ENCODE measurements at regions of chr1 and their contacts with region 1.

Region 1: GRCh38 chr1:211133836-211134669 is at the start of gene KCNH1:
- DNase-seq: peak; percentile 77
- H3K4me3 ChIP-seq: peak within 1 kb of the TSS in 1 of 3 experiments; percentile 17
- H3K27ac ChIP-seq: no peak within 1 kb of the TSS
- H3K4me1 ChIP-seq: peaks cover 2% of the 10 kb centered on the region
- H3K27me3 ChIP-seq: peaks cover 11 to 31% of the 10 kb centered on the region in 2 experiments
- CTCF ChIP-seq: peak; percentile 84 to 96
- POLR2A ChIP-seq: no peak
- total RNA-seq, gene KCNH1: not detected in 2 replicates

Region 2: DNA sequence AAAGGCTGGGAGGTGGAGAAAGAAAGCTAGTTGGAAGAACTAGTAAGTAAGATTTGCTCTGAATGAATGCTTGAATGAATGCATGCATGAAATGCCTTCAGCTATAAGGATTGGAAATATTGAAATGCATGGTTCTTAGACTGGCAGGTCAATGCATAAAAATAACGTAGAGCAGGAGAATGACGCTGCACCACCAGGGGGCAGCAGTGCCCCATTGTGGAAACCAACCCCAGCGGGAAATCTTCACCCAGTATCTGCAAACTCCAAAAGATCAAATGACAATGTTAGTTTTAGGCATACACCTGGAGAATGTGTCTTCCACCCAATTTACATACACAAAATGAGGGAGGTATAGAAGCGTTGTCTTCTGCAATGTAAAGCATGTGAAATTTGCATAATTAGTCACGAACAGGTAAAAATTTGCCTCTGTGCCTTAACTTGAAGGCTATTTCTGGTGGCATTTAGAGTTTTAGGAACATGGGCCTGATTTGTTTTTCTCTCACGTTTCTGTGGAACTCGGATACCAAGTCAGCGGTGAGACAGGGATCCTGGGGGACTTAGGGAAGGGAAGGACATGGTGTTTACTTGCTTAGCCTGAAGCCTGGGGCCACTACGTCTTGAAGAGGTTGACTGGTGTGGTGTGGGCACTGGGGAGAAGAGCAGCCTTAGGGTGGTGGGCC is 726.7 kb before region 1 on chr1:
- CTCF ChIA-PET with region 1: interaction called, 202 read pairs
- POLR2A ChIA-PET with region 1: no interaction called
- dilution Hi-C with region 1: no loop called
- intact Hi-C with region 1: loop called (anchors 1 kb)
- DNase-seq: peak; percentile 61
- H3K4me3 ChIP-seq: no peak overlapping the region
- H3K27ac ChIP-seq: no peak overlapping the region
- H3K4me1 ChIP-seq: no peaks in the 10 kb centered on the region
- H3K27me3 ChIP-seq: peaks cover 3 to 11% of the 10 kb centered on the region in 2 experiments
- CTCF ChIP-seq: peak; percentile 83 to 95
- POLR2A ChIP-seq: no peak

Region 3: DNA sequence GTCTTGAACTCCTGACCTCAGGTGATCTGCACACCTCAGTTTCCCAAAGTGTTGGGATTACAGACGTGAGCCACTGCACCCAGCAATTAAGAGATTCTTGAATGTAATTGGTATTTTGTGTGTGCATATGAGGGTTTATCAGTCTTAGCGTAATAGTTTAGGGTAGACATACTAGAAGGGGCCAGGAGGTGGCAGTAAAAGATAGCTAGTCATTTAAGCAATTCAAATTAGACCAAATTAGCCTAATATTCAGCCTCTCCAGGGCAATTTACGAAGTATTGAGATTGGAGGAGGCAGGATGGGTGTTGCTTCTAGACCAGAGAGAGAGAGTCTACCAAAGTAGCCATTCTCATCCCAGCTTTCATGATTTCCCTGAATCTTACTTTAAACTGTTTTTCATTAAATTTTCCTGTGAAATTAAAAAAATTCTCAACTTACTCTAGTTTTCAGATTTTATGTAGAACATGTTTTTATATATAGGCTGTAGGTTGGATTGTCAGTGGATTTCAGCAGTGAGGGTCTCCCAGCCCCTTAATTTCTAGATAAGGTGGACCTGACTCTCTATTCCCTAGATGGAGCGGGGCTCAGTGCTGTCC is 685.7 kb before region 1 on chr1:
- CTCF ChIA-PET with region 1: interaction called, 163 read pairs
- POLR2A ChIA-PET with region 1: no interaction called
- dilution Hi-C with region 1: no loop called
- intact Hi-C with region 1: loop called (anchors 1 kb)
- DNase-seq: peak; percentile 62
- H3K4me3 ChIP-seq: no peak overlapping the region
- H3K27ac ChIP-seq: no peak overlapping the region
- H3K4me1 ChIP-seq: no peaks in the 10 kb centered on the region
- H3K27me3 ChIP-seq: peaks cover 0 to 3% of the 10 kb centered on the region in 2 experiments
- CTCF ChIP-seq: peak; percentile 32 to 50
- POLR2A ChIP-seq: no peak

Region 4: DNA sequence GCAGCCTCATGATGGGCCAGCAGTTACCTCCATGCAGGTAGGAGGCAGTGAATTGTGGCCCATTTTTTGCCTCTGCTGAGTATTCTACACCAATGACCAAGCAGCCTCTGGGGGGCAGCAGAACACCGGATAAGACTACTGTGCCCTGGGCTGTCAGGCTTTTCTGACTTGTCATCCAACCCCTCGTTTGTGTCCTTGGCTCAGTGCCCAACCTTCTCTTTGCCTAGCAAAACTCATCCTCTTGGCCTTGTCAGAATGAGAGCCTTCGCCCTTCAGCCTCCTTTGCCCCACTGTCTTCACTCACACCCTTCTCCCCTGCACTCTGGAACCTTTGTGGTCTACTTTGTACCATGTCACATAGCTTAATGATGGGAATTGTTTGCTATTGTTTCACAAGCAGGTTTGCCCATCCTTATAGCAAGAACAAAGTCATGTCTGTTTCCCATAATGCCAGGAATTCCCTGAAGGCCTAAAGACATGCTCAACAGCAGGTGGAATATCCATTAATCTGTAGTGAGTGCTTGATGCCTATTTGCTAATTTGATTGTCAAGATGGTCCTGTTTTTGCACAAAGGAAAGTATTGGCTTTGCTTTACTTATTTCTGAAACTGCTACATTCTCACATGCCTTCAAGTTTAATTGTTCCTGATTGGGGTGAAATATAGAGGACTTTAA is 549.5 kb before region 1 on chr1:
- CTCF ChIA-PET with region 1: interaction called, 9 read pairs
- POLR2A ChIA-PET with region 1: no interaction called
- dilution Hi-C with region 1: no loop called
- intact Hi-C with region 1: loop called (anchors 1 kb)
- DNase-seq: peak; percentile 27
- H3K4me3 ChIP-seq: no peak overlapping the region
- H3K27ac ChIP-seq: no peak overlapping the region
- H3K4me1 ChIP-seq: no peaks in the 10 kb centered on the region
- H3K27me3 ChIP-seq: no peaks in the 10 kb centered on the region
- CTCF ChIP-seq: peak; percentile 40
- POLR2A ChIP-seq: no peak

Region 5: DNA sequence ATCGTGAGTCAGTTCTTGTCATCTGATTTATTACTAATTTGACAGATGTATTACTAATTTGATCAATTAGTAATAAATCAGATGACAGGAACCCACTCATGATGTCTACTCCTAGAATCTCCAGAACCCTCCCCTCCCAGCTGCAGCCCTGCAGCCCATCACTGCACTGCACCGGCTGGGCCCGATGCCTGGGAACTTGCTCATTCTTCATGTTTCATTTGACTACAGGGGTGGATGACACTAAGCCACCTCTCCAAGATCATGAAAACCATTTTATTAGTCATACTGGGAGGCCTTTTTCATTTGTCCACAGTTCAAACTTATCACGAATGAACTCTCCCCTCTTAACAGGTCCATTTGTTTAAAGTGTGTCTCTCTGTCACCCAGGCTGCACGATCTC is 41.1 kb before region 1 on chr1:
- CTCF ChIA-PET with region 1: no interaction called
- POLR2A ChIA-PET with region 1: no interaction called
- dilution Hi-C with region 1: no loop called
- intact Hi-C with region 1: no loop called
- DNase-seq: no peak
- H3K4me3 ChIP-seq: no peak overlapping the region
- H3K27ac ChIP-seq: no peak overlapping the region
- H3K4me1 ChIP-seq: no peaks in the 10 kb centered on the region
- H3K27me3 ChIP-seq: no peaks in the 10 kb centered on the region
- CTCF ChIP-seq: no peak
- POLR2A ChIP-seq: no peak

Region 6: DNA sequence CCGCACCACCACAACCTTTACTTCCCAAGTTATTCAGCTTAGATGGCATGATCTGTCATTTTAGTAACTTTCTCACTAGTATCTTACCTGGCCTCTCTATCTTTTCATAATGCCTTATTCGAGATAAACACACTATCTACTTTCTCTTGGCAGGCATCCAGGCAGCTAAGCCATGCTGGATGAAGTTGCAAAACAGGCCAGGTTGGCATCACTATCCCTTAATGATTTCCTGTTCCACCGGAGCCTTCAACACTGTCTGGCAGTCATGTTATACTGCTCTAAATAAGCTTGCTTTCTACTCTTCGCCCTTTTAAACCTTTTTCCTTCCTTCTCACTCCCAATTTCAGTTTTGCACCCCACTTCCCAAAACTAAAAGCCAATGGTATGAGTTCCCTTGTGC is 11.9 kb after region 1 on chr1:
- CTCF ChIA-PET with region 1: interaction called, 14 read pairs
- POLR2A ChIA-PET with region 1: no interaction called
- dilution Hi-C with region 1: no loop called
- intact Hi-C with region 1: no loop called
- DNase-seq: no peak
- H3K4me3 ChIP-seq: no peak overlapping the region
- H3K27ac ChIP-seq: no peak overlapping the region
- H3K4me1 ChIP-seq: no peaks in the 10 kb centered on the region
- H3K27me3 ChIP-seq: no peaks in the 10 kb centered on the region
- CTCF ChIP-seq: no peak
- POLR2A ChIP-seq: no peak

Region 7: DNA sequence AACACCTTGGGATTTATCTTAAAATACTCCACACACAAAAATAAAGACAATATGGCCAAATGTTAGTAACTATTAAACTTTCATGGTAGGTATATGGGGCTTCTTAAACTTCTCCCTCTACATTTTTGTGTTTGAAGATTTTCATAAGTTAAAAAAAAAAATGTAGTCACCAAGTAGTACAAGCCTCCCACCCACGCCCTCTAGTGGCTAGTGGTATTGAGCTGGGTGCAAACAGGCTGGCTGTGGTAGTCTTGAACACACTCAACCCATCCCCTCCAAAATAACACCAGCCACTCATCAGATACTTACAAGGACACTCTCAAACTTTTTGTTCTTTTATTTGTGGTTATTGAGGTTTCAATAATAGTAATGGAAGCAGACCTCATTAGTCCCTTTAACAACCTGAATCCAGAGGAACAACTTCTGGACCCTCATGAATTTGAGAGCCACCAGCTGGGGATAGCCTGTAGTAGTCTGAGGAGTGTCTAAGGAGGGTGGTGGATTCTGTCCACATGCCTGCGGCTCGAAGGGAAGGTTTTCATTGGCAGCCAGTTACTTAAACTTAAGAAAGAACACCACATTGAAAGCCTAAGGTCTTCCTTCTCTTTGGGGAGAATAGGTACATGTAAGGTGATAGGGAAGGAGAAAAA is 342.3 kb after region 1 on chr1:
- CTCF ChIA-PET with region 1: interaction called, 3 read pairs
- POLR2A ChIA-PET with region 1: no interaction called
- dilution Hi-C with region 1: no loop called
- intact Hi-C with region 1: loop called (anchors 10 kb)
- DNase-seq: peak; percentile 69
- H3K4me3 ChIP-seq: no peak overlapping the region
- H3K27ac ChIP-seq: no peak overlapping the region
- H3K4me1 ChIP-seq: no peaks in the 10 kb centered on the region
- H3K27me3 ChIP-seq: peaks cover 19 to 38% of the 10 kb centered on the region in 2 experiments
- CTCF ChIP-seq: peak; percentile 87 to 88
- POLR2A ChIP-seq: no peak

Measured in endothelial cell of umbilical vein (primary cell).